SK-N-SH (cell line): ENCODE measurements at regions of chr4 and their contacts with region 1.

Region 1: GRCh38 chr4:154506253-154506652 is 14.7 kb upstream of the DCHS2 start:
- DNase-seq: peak; percentile 12
- H3K4me3 ChIP-seq: no peak overlapping the region; a peak in 1 of 4 replicates
- H3K27ac ChIP-seq: no peak overlapping the region
- H3K4me1 ChIP-seq: no peaks in the 10 kb centered on the region
- H3K27me3 ChIP-seq: peaks cover 49% of the 10 kb centered on the region; the same call in 1 of the 2 replicates
- CTCF ChIP-seq: peak; percentile 58
- EP300 ChIP-seq: no peak
- RAD21 ChIP-seq: peak; percentile 61

Region 2: DNA sequence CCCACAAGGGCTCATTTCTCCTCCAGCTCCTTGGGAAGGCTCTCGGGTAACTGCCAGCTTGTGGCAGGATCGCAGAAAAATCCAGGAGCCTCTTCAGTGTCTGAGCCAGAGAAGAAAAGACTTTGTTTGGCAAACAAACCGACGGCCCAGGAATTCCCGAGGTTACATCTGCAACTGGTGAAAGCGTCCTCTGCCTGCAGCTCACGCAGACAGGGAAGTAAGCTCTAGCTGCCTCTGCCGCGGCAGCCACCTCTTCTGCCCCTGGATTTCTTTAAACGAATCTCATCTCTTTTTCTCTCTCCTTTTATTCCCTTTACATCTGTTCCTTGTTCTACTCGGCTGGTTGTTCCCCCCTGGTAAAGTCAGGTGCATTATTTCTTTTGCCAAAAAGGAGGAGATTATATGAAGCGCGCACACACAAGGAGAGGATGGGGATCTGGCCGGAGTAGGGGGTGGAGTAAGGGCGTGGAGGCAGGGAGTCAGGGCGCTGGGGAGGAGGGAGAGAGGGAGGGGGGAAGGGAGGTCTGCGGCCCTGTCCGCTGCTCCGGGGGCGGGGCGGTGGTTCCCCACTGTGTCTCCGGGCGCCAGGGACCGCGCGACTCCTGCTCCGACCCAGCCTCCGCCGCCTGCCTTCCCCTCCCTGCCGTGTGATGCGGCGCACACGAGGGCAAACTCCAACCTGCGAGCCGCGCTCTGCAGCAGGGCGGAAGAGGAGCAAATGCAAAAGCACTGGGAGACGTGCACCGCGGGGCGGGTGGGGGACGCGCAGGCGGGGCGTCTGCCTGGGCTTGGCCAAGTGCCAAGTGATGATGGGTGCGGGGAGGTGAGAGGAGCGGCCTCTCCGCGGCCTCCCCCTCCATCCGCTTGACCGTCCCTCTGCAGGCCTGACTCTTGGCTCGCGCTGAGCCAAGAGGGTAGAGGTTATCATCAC is 14.6 kb before region 1 on chr4 and contains the start of gene DCHS2:
- CTCF ChIA-PET with region 1: interaction called, 10 read pairs
- POLR2A ChIA-PET with region 1: no interaction called
- DNase-seq: peak; percentile 55
- H3K4me3 ChIP-seq: peak within 1 kb of the TSS in 1 of 2 experiments; percentile 23; a peak in 1 of 4 replicates
- H3K27ac ChIP-seq: no peak within 1 kb of the TSS
- H3K4me1 ChIP-seq: no peaks in the 10 kb centered on the region
- H3K27me3 ChIP-seq: peaks cover 30% of the 10 kb centered on the region; the same call in 1 of the 2 replicates
- CTCF ChIP-seq: no peak
- EP300 ChIP-seq: no peak
- RAD21 ChIP-seq: no peak
- polyA plus RNA-seq, gene DCHS2: not detected in 2 replicates

Region 3: DNA sequence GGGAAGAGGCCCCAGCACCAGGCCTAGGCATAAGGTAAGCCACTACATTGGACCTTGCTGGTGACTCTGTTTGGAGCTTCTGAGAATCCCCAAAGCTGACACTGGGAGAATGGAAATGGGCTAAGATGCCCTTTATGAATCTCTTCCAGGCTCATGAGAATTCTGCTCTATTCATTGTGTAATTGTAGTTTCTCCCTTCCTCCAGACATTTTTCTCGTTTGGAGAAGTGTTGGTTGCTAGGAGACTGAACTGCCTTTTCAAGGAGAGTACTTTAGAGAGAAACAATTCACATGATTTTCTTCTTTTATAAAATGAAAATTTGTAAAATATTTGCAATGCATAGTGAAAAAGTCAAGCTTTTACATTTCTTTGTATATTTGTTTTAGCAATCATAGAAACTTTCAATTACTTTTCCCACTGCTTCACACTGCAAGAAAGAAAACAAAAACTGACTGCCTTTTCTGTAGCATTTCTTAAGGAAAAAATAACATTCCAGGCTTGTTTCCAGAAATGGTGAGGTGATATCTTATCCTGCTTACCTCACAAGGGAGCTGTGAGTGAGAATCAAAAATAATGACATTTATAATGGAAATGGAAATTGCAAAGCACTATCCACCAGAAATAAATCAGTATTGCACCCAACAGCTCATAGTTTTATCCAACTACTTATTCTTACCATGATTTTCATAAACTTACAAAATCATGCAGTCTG is 10.2 kb after region 1 on chr4:
- CTCF ChIA-PET with region 1: interaction called, 20 read pairs
- POLR2A ChIA-PET with region 1: no interaction called
- DNase-seq: no peak
- H3K4me3 ChIP-seq: no peak overlapping the region
- H3K27ac ChIP-seq: no peak overlapping the region
- H3K4me1 ChIP-seq: no peaks in the 10 kb centered on the region
- H3K27me3 ChIP-seq: peaks cover 19% of the 10 kb centered on the region; the same call in 1 of the 2 replicates
- CTCF ChIP-seq: no peak
- EP300 ChIP-seq: no peak
- RAD21 ChIP-seq: no peak

Region 4: GRCh38 chr4:154577324-154577723 is 71.1 kb after region 1 on chr4:
- CTCF ChIA-PET with region 1: no interaction called
- POLR2A ChIA-PET with region 1: no interaction called
- DNase-seq: no peak
- H3K4me3 ChIP-seq: no peak overlapping the region
- H3K27ac ChIP-seq: no peak overlapping the region
- H3K4me1 ChIP-seq: no peaks in the 10 kb centered on the region
- H3K27me3 ChIP-seq: no peaks in the 10 kb centered on the region; the same call in none of the 2 replicates
- CTCF ChIP-seq: no peak
- EP300 ChIP-seq: no peak
- RAD21 ChIP-seq: no peak